ENCODE measurements at regions of chr1 and their contacts with region 1.

Region 1: GRCh38 chr1:242187816-242188215 is 188.9 kb upstream of the MAP1LC3C start:
- DNase-seq: no peak
- H3K4me3 ChIP-seq: no peak overlapping the region
- H3K27ac ChIP-seq: no peak overlapping the region
- H3K4me1 ChIP-seq: peaks cover 0 to 6% (median 4%) of the 10 kb centered on the region in 4 experiments; a peak in 4 of 7 replicates
- H3K27me3 ChIP-seq: no peaks in the 10 kb centered on the region
- CTCF ChIP-seq: no peak
- EP300 ChIP-seq: no peak
- POLR2A ChIP-seq: no peak
- RAD21 ChIP-seq: no peak

Region 2: DNA sequence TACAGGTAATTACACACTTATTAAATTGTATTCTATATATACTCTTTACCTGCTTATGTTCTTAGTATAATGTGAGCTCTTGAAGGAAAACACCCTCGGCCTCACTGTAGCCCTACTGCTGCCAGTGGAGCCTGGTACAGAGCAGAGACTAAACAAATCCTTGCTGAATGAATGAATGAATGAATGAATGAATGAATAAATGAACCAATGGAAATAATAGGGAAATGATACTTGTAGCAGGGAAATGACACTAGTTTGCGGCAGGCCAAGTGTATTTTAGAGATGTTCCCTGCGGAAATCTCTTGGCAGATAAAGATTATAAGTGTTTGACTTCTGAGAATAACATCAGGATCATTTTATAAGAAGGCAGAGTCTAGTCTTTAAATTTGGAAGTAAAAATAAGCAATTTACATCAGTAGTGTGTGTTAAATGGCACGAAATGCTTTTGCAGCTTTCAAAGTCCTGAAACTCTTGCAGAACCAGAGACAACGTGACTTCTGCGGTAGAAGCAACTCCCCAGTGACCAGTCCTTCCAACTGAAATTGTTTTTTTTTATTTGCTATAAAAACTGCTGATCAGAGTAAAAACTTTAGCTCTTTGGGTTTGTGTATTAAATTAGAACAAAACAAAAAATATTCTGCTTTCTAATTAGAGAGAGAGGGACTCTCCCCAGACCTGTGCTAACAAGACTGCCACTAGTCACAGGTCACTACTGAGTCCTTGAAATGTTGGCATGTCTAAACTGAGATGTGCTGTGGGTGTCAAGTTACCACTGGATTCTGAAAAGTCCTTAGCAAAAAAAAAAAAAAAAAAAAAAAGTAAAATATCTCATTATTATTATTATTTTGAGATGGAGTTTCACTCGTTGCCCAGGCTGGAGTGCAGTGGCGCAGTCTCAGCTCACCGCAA is 10.3 kb after region 1 on chr1:
- CTCF ChIA-PET with region 1: interaction called, 16 read pairs
- POLR2A ChIA-PET with region 1: interaction called, 3 read pairs
- DNase-seq: no peak
- H3K4me3 ChIP-seq: no peak overlapping the region
- H3K27ac ChIP-seq: no peak overlapping the region
- H3K4me1 ChIP-seq: peaks cover 0 to 10% (median 1%) of the 10 kb centered on the region in 4 experiments; a peak in 4 of 7 replicates
- H3K27me3 ChIP-seq: no peaks in the 10 kb centered on the region
- CTCF ChIP-seq: no peak
- EP300 ChIP-seq: no peak
- POLR2A ChIP-seq: no peak
- RAD21 ChIP-seq: no peak

Region 3: DNA sequence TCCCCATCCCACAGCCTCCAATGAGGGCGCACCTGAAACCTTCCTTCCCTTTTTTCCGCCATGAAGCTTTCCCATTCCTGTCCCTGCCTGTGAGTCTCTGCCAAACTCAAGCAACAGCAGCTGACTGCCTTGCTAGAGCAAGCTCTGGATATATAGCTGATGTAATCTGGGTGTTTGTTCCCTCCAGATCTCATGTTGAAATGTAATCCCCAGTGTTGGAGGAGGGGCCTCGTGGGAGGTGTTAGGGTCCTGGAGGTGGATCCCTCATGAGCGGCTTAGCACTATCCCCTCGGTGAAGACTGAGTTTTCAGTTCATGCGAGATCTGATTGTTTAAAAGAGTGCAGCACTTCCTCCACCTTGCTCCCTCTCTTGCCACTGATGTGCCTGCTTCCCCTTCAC is 15.4 kb after region 1 on chr1:
- CTCF ChIA-PET with region 1: interaction called, 16 read pairs
- POLR2A ChIA-PET with region 1: interaction called, 3 read pairs
- DNase-seq: no peak
- H3K4me3 ChIP-seq: no peak overlapping the region
- H3K27ac ChIP-seq: no peak overlapping the region
- H3K4me1 ChIP-seq: peaks cover 0 to 9% (median 3%) of the 10 kb centered on the region in 4 experiments; a peak in 4 of 7 replicates
- H3K27me3 ChIP-seq: no peaks in the 10 kb centered on the region
- CTCF ChIP-seq: no peak
- EP300 ChIP-seq: no peak
- POLR2A ChIP-seq: no peak
- RAD21 ChIP-seq: no peak

Region 4: GRCh38 chr1:242425232-242425631 is 237.4 kb after region 1 on chr1:
- CTCF ChIA-PET with region 1: no interaction called
- POLR2A ChIA-PET with region 1: no interaction called
- DNase-seq: no peak
- H3K4me3 ChIP-seq: no peak overlapping the region
- H3K27ac ChIP-seq: no peak overlapping the region
- H3K4me1 ChIP-seq: no peaks in the 10 kb centered on the region
- H3K27me3 ChIP-seq: no peaks in the 10 kb centered on the region
- CTCF ChIP-seq: peak in 1 of 3 experiments; percentile 16; a peak in 1 of 4 replicates
- EP300 ChIP-seq: no peak
- POLR2A ChIP-seq: no peak
- RAD21 ChIP-seq: no peak

Region 5: GRCh38 chr1:242454262-242455045 is 266.6 kb after region 1 on chr1:
- CTCF ChIA-PET with region 1: no interaction called
- POLR2A ChIA-PET with region 1: no interaction called
- DNase-seq: no peak
- H3K4me3 ChIP-seq: no peak overlapping the region
- H3K27ac ChIP-seq: no peak overlapping the region
- H3K4me1 ChIP-seq: peaks cover 2 to 7% (median 3%) of the 10 kb centered on the region in 4 experiments; a peak in 4 of 7 replicates
- H3K27me3 ChIP-seq: no peaks in the 10 kb centered on the region
- CTCF ChIP-seq: peak in 2 of 3 experiments; percentile 62 to 68; a peak in 3 of 4 replicates
- EP300 ChIP-seq: no peak
- POLR2A ChIP-seq: no peak
- RAD21 ChIP-seq: peak; percentile 83 to 84

Measured in H1 (cell line).